ENCODE measurements at regions of chr16 and their contacts with region 1.

Region 1: GRCh38 chr16:8436931-8437330 is 153.4 kb downstream of the TMEM114 start:
- DNase-seq: no peak
- ATAC-seq: no peak

Region 2: GRCh38 chr16:8505327-8505991 is 68.5 kb after region 1 on chr16:
- intact Hi-C with region 1: loop called (anchors 2 kb)
- DNase-seq: no peak
- ATAC-seq: no peak

Region 3: GRCh38 chr16:8818504-8819270 is 381.8 kb after region 1 on chr16:
- intact Hi-C with region 1: no loop called
- DNase-seq: no peak
- ATAC-seq: no peak

Region 4: DNA sequence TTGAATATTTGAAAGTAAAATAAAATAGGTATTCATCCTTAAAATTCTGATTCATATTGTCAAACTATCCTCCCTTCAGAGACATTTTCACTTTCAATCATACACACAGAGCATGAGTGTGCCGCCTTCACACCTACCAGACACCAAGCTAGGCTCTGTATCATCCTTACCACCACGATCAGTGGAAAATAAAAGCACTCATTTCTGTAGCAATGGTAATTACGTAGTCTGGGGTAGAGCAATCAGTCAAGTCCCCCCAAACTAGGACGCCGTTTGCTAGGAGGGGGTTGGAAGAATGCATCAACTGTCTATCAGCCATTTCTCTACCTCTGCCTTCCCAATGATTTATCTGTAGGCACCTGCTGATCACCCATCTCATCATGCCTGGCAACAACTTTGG is 1829.9 kb after region 1 on chr16:
- intact Hi-C with region 1: no loop called
- DNase-seq: no peak
- ATAC-seq: no peak